PC-9 (cell line): ENCODE measurements at regions of chr6 and their contacts with region 1.

Region 1: GRCh38 chr6:137291441-137291840 is 72.3 kb upstream of the IFNGR1 start:
- DNase-seq: no peak
- H3K4me3 ChIP-seq: no peak overlapping the region
- H3K27ac ChIP-seq: no peak overlapping the region
- H3K4me1 ChIP-seq: no peaks in the 10 kb centered on the region
- H3K27me3 ChIP-seq: no peaks in the 10 kb centered on the region
- CTCF ChIP-seq: no peak

Region 2: GRCh38 chr6:136051140-136051775 is 1240.2 kb before region 1 on chr6:
- CTCF ChIA-PET with region 1: no interaction called
- POLR2A ChIA-PET with region 1: interaction called, 17 read pairs
- intact Hi-C with region 1: no loop called
- DNase-seq: no peak
- H3K4me3 ChIP-seq: no peak overlapping the region
- H3K27ac ChIP-seq: no peak overlapping the region
- H3K4me1 ChIP-seq: no peaks in the 10 kb centered on the region
- H3K27me3 ChIP-seq: no peaks in the 10 kb centered on the region
- CTCF ChIP-seq: no peak

Region 3: GRCh38 chr6:137145421-137145820 is 146.0 kb before region 1 on chr6:
- CTCF ChIA-PET with region 1: no interaction called
- POLR2A ChIA-PET with region 1: no interaction called
- intact Hi-C with region 1: no loop called
- DNase-seq: no peak
- H3K4me3 ChIP-seq: no peak overlapping the region
- H3K27ac ChIP-seq: no peak overlapping the region
- H3K4me1 ChIP-seq: peaks cover 23% of the 10 kb centered on the region
- H3K27me3 ChIP-seq: no peaks in the 10 kb centered on the region
- CTCF ChIP-seq: no peak